ENCODE measurements at regions of chr20 and their contacts with region 1.

Region 1: GRCh38 chr20:53939572-53940359 is 130.6 kb downstream of the BCAS1 start:
- DNase-seq: peak; percentile 94
- H3K4me3 ChIP-seq: no peak overlapping the region
- H3K27ac ChIP-seq: peak overlapping the region; percentile 65
- H3K4me1 ChIP-seq: peaks cover 29% of the 10 kb centered on the region
- H3K27me3 ChIP-seq: no peaks in the 10 kb centered on the region
- CTCF ChIP-seq: peak; percentile 70 to 84
- POLR2A ChIP-seq: no peak

Region 2: GRCh38 chr20:53077373-53078205 is 862.2 kb before region 1 on chr20:
- CTCF ChIA-PET with region 1: no interaction called
- POLR2A ChIA-PET with region 1: no interaction called
- dilution Hi-C with region 1: no loop called
- intact Hi-C with region 1: loop called (anchors 5 kb)
- DNase-seq: peak; percentile 60
- H3K4me3 ChIP-seq: no peak overlapping the region
- H3K27ac ChIP-seq: peak overlapping the region; percentile 38
- H3K4me1 ChIP-seq: peaks cover 32% of the 10 kb centered on the region
- H3K27me3 ChIP-seq: no peaks in the 10 kb centered on the region
- CTCF ChIP-seq: no peak
- POLR2A ChIP-seq: no peak

Region 3: DNA sequence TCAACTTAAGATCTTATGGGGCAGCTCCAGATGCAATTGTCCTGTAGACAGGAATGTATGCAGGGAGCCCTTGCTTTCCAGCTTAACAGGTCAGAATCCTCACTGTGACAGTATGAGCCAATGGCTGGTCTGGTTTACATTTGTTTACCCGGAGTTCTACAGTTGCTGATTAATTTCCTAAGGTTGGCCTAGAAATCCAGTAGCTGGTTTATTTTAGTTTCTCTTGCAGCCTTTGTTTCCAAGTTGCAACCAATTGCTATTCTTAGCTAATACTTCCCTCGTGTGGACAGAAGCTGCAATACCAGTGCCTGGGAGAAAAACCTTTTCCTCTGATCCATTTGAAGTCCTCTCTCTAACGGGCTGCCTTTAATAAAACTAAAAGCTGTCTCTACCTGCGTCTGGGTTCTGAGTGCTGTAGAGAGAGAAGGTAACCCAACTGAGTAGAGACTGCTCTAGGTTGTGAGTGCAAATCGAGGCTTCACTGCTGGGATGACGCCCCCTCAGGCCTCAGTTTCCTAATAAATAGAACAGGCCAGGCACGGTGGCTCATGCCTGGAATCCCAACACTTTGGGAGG is 392.0 kb before region 1 on chr20:
- CTCF ChIA-PET with region 1: interaction called, 25 read pairs
- POLR2A ChIA-PET with region 1: interaction called, 3 read pairs
- dilution Hi-C with region 1: no loop called
- intact Hi-C with region 1: no loop called
- DNase-seq: peak; percentile 68
- H3K4me3 ChIP-seq: no peak overlapping the region
- H3K27ac ChIP-seq: no peak overlapping the region
- H3K4me1 ChIP-seq: no peaks in the 10 kb centered on the region
- H3K27me3 ChIP-seq: no peaks in the 10 kb centered on the region
- CTCF ChIP-seq: peak; percentile 48 to 65
- POLR2A ChIP-seq: no peak

Region 4: DNA sequence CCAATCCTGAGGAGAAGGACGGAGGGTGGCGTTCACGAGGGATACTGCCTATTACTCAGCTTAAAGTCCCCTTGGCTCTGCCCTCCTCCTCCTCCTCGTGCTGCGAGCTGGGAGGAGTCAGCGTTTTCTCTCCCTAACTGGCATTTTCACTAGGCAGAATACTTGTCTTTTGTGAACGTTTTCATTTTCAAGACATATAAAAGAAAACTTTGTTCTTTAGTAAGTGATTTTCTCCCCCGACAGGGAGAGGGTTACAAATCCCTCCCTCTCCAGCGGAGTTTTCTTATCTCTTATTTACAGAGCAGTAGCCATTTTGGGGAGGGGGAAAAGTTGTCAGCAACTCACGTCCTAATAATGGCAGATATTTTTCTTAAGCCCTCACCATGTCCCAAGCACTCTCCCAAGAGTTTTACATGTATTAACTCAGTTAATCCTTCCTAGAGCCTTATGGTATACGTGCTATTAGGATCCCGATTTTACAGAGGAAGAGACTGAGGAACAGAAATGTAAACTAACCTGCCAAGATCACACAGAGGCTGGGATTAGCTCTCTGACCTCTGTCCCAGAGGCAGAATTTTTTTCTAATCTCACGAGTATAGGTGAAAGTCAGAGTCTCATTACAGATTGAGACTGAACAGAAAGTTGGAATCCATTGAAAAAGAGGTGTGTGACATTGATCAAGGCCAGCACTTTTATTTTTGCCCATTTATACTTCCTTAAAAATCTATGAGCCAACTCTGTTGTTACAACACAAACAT is 316.1 kb before region 1 on chr20:
- CTCF ChIA-PET with region 1: interaction called, 27 read pairs
- POLR2A ChIA-PET with region 1: no interaction called
- dilution Hi-C with region 1: no loop called
- intact Hi-C with region 1: loop called (anchors 1 kb)
- DNase-seq: peak; percentile 85
- H3K4me3 ChIP-seq: peak overlapping the region in 1 of 3 experiments; percentile 43
- H3K27ac ChIP-seq: peak overlapping the region; percentile 92
- H3K4me1 ChIP-seq: peaks cover 26% of the 10 kb centered on the region
- H3K27me3 ChIP-seq: no peaks in the 10 kb centered on the region
- CTCF ChIP-seq: no peak
- POLR2A ChIP-seq: no peak

Region 5: DNA sequence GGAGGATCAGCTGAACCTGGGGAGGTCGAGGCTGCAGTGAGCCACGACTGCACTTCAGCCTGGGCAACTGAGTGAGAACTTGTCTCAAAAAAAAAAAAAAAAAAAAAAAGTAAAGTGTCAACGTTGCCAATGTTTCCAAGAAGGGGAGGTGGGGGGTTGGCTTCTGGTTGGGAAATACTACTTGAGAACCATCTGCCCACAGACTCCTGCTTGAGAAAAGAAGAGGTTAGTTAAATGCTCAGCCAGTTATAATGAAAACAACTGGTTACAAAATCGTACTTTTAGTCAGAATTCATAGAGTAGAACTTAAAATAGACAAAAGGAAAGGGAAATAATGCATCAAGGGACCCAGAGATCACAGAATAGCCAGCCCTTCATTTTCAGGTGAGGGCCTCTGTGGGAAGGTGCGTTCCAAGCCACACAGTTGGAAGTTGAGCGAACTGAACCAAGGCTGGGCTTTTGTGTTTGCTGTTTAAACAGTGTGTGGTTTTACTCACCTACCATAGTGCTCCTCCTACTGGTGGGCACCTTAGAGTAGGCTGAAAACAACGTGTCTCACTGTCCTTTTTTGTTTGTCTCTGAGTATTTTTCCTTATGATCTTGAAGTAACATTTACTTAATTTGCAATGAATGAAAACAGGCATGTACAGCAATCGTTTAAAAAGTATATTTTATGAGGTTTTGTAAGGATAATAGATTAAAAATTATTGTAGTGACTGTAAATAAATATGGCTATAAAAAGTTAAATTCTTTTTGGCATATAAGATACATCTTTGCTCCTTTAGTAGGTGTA is 70.1 kb before region 1 on chr20:
- CTCF ChIA-PET with region 1: interaction called, 24 read pairs
- POLR2A ChIA-PET with region 1: no interaction called
- dilution Hi-C with region 1: no loop called
- intact Hi-C with region 1: loop called (anchors 1 kb)
- DNase-seq: peak; percentile 82
- H3K4me3 ChIP-seq: no peak overlapping the region
- H3K27ac ChIP-seq: no peak overlapping the region
- H3K4me1 ChIP-seq: peaks cover 22% of the 10 kb centered on the region
- H3K27me3 ChIP-seq: no peaks in the 10 kb centered on the region
- CTCF ChIP-seq: peak; percentile 74 to 77
- POLR2A ChIP-seq: no peak

Region 6: GRCh38 chr20:53926428-53927028 is 13.2 kb before region 1 on chr20:
- CTCF ChIA-PET with region 1: interaction called, 20 read pairs
- POLR2A ChIA-PET with region 1: no interaction called
- dilution Hi-C with region 1: no loop called
- intact Hi-C with region 1: loop called (anchors 1 kb)
- DNase-seq: peak; percentile 96
- H3K4me3 ChIP-seq: no peak overlapping the region
- H3K27ac ChIP-seq: peak overlapping the region; percentile 77
- H3K4me1 ChIP-seq: peaks cover 13% of the 10 kb centered on the region
- H3K27me3 ChIP-seq: no peaks in the 10 kb centered on the region
- CTCF ChIP-seq: no peak
- POLR2A ChIP-seq: peak; percentile 38

Region 7: DNA sequence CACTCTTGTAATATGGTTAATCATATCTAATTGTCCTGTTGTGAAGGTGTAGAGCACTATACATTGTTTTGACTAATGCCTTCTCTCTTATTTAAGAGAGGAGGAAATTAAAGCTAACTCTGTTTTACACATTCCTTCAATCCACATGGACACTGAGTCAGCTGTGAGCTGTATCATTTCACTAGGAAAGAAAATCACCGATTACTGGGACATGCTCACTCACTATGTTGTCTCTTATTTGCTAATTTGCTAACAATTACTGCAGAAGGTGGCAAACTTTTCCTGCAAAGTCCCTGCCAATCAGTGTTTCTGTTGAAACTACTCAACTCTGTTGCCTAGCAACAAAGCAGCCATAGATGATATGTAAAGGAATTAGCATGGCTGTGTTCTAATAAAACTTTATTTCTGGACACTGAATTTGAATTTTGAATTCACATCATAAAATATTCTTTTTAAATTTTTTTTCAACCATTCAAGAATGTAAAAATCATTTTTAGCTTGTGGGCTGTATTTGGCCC is 32.5 kb after region 1 on chr20:
- CTCF ChIA-PET with region 1: no interaction called
- POLR2A ChIA-PET with region 1: no interaction called
- dilution Hi-C with region 1: no loop called
- intact Hi-C with region 1: no loop called
- DNase-seq: no peak
- H3K4me3 ChIP-seq: no peak overlapping the region
- H3K27ac ChIP-seq: no peak overlapping the region
- H3K4me1 ChIP-seq: no peaks in the 10 kb centered on the region
- H3K27me3 ChIP-seq: no peaks in the 10 kb centered on the region
- CTCF ChIP-seq: no peak
- POLR2A ChIP-seq: no peak

Region 8: GRCh38 chr20:54231036-54231435 is 291.3 kb after region 1 on chr20:
- CTCF ChIA-PET with region 1: no interaction called
- POLR2A ChIA-PET with region 1: no interaction called
- dilution Hi-C with region 1: no loop called
- intact Hi-C with region 1: no loop called
- DNase-seq: no peak
- H3K4me3 ChIP-seq: no peak overlapping the region
- H3K27ac ChIP-seq: no peak overlapping the region
- H3K4me1 ChIP-seq: no peaks in the 10 kb centered on the region
- H3K27me3 ChIP-seq: peaks cover 0 to 2% of the 10 kb centered on the region in 2 experiments
- CTCF ChIP-seq: no peak
- POLR2A ChIP-seq: no peak

Measured in endothelial cell of umbilical vein (primary cell).